Activated T-helper 1 cell treated with anti-CD3 and anti-CD28 coated beads, Interleukin-12 subunit alpha, Interleukin-12 subunit beta, Interleukin-2, Interleukin-4 antibody, amounts not matched to agents 30 ng/mL and 10 ng/mL and 1 ng/mL, durations not matched to agents 14 hours and 24 hours and 36 hours (primary cell): ENCODE measurements at regions of chr3 and their contacts with region 1.

Region 1: GRCh38 chr3:30606301-30607031 is at the start of gene TGFBR2:
- DNase-seq: peak; percentile 81
- H3K4me3 Mint-ChIP-seq: peak within 1 kb of the TSS; percentile 97
- H3K27ac Mint-ChIP-seq: peak within 1 kb of the TSS; percentile 98
- H3K4me1 Mint-ChIP-seq: peaks cover 72% of the 10 kb centered on the region
- H3K27me3 Mint-ChIP-seq: no peaks in the 10 kb centered on the region
- total RNA-seq, gene TGFBR2: 58.2 and 59.6 TPM in 2 replicates

Region 2: DNA sequence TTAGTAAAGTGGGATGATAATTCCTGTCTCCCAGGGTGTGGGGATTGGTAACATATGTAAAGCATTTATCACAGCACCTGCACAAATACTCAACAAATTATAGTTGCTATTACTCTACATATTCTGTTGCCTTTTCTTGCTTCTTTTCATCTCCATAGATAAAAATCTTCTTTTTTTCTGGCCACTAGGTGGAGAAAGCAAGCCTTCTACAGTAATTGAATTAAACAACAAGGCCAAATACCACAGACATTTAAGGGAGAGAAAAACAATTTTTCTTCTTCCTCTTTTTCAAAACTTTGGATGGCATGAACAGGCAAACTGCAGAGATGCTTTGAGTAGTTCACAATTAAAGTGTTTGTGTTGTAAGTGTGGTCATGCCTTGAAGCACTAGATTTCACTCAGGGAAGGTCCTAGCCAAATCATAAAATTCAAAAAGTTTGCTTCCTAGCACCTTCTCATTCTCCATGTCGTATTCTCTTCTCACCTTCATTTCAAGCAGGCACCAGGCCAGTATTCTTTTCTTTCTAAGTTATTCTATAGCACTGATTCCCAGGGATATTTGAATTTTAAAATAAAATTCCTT is 493.5 kb before region 1 on chr3:
- intact Hi-C with region 1: loop called (anchors 2 kb)
- DNase-seq: no peak
- H3K4me3 Mint-ChIP-seq: no peak overlapping the region
- H3K27ac Mint-ChIP-seq: no peak overlapping the region
- H3K4me1 Mint-ChIP-seq: peaks cover 4% of the 10 kb centered on the region
- H3K27me3 Mint-ChIP-seq: peaks cover 12% of the 10 kb centered on the region

Region 3: DNA sequence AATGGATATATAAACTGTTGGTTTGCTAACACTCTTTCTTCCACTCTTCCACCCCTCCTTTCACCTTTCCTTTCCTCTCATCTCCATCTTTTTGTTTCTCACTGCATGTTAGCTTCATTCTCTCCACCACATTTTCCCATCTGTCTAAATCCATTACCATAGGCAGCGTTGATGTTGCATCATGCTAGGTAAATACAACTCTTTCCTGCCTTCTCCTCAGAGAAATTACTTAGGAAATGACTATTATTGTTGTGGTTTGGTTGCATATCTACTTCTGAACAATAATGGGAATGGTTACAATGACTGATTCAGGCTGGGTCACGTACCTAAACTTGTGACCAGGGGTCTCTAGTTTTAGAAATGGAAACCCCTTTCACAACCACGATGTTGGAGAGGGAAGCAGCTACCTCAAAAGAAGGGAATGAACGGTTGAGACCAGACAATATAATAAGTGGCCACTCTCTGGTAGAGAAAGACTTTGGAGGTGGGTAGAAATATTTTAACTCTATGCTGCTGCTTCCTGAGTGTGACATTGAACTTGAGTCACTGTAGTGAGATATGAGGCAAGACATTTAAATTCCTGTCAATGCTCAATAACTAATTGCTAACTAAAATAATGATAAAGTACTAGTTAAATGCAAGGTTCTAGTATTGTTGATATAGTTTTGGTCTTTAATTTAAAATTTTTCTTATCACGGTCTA is 314.1 kb before region 1 on chr3:
- intact Hi-C with region 1: loop called (anchors 2 kb)
- DNase-seq: no peak
- H3K4me3 Mint-ChIP-seq: no peak overlapping the region
- H3K27ac Mint-ChIP-seq: no peak overlapping the region
- H3K4me1 Mint-ChIP-seq: peaks cover 44% of the 10 kb centered on the region
- H3K27me3 Mint-ChIP-seq: no peaks in the 10 kb centered on the region

Region 4: DNA sequence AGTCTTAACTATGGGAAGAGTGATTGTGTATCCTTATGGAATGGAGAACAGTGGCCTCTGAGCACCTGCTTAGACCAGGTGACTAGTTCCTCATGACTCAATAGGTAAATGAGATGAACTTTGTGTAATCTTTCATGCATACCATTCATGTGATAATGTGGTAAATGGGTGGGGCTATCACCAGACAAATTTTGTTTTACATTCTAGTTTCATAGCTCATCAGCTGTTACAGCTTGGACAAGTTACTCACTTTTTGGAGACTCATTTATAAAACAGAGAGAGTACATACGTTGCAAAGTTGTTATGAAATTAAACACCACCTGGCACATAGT is 103.8 kb before region 1 on chr3:
- intact Hi-C with region 1: loop called (anchors 2 kb)
- DNase-seq: no peak
- H3K4me3 Mint-ChIP-seq: no peak overlapping the region
- H3K27ac Mint-ChIP-seq: no peak overlapping the region
- H3K4me1 Mint-ChIP-seq: peaks cover 35% of the 10 kb centered on the region
- H3K27me3 Mint-ChIP-seq: no peaks in the 10 kb centered on the region

Region 5: GRCh38 chr3:30623351-30623750 is 16.9 kb after region 1 on chr3:
- intact Hi-C with region 1: loop called (anchors 1 kb)
- DNase-seq: no peak
- H3K4me3 Mint-ChIP-seq: peak overlapping the region; percentile 66
- H3K27ac Mint-ChIP-seq: peak overlapping the region; percentile 90
- H3K4me1 Mint-ChIP-seq: peaks cover 83% of the 10 kb centered on the region
- H3K27me3 Mint-ChIP-seq: no peaks in the 10 kb centered on the region

Region 6: GRCh38 chr3:30658328-30659052 is 52.0 kb after region 1 on chr3:
- intact Hi-C with region 1: loop called (anchors 1 kb)
- DNase-seq: no peak
- H3K4me3 Mint-ChIP-seq: peak overlapping the region; percentile 85
- H3K27ac Mint-ChIP-seq: peak overlapping the region; percentile 96
- H3K4me1 Mint-ChIP-seq: peaks cover 97% of the 10 kb centered on the region
- H3K27me3 Mint-ChIP-seq: no peaks in the 10 kb centered on the region

Region 7: GRCh38 chr3:31481685-31482084 is 875.2 kb after region 1 on chr3:
- intact Hi-C with region 1: no loop called
- DNase-seq: no peak
- H3K4me3 Mint-ChIP-seq: no peak overlapping the region
- H3K27ac Mint-ChIP-seq: no peak overlapping the region
- H3K4me1 Mint-ChIP-seq: no peaks in the 10 kb centered on the region
- H3K27me3 Mint-ChIP-seq: peaks cover 5% of the 10 kb centered on the region